MCF 10A (cell line): ENCODE measurements at regions of chr11 and their contacts with region 1.

Region 1: DNA sequence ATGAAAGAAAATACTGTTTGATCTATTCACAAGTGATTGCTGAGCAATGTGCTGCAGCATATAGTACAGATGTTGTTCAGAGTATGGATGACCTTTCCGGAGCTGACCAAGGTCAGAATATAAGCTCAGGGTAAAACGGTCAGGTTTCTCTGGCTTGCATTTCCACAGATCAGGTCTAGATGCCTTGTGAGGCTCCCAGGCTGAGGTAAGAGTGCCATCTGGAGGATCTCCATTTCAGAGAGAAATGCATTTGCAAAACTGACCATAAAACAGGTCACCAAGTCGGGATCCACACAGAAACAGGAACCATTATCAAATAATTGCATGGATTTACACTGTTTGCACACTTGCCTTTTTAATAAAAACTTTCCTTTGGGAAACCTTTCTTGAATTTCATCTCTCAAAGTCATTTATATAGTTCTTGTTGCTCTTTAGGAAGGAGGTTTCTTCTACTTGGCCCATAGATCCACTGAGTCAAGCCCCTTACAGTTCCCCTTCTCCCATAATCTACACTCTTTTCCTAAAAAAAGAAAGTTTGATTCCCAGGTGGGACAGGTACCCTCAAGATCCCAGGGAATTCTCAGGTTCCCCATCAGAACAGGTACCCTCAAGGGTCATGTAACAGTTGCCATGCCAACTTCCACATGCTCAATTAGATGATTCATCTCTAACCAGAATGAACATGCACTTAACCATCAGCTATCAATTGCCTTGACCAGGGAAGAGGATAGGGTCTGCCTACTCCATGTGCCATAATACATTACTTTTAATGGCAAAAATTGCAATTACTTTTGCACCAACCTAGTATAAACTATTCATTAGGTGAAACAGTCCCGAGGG is 25.0 kb upstream of the TMPRSS5 start:
- DNase-seq: peak; percentile 53
- H3K4me3 Mint-ChIP-seq: no peak overlapping the region
- H3K27ac Mint-ChIP-seq: no peak overlapping the region
- H3K4me1 Mint-ChIP-seq: peaks cover 12% of the 10 kb centered on the region
- H3K27me3 Mint-ChIP-seq: no peaks in the 10 kb centered on the region
- CTCF ChIP-seq: peak; percentile 67

Region 2: DNA sequence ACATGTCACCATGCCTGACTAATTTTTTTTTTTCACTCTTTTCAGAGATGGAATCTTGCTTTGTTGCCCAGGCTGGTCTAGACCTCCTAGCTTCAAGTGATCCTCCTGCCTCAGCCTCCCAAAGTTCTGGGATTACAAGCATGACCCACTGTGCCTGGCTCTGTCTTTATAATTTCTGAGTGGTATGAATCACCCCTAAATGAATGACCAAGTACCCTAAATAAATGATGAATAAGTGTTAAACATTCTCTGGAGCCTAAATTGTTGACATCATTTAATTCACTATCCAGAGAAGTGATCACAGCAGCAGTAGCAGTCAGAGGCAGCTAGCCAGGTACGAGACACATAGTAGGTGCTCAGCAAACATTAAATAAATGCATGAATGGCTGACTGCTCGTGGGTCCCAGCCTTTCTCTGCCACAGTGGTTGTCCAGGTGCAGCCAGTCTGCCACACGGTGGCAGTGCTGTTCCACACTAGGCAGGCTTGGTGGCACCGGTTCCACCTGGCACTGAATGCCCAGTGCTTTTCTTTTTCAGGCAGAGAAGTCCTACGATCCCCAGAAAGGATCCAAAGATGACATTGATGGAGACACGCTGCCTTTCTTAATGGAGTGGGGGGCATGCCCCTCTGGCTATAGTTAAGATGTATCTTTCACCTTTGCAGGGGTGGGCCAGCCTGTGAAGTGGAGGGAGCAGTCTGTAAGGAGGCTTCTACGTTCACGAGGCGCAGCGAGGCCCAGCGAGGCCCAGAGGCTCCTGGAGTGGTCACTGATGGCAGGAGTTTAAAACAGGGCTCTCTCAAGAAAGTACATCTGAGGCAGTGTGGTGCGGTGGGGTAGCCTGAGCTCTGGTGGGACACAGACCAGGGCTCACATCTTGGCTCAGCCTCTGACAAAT is 425.4 kb before region 1 on chr11:
- CTCF ChIA-PET with region 1: interaction called, 105 read pairs
- POLR2A ChIA-PET with region 1: no interaction called
- intact Hi-C with region 1: loop called (anchors 1 kb)
- DNase-seq: peak; percentile 79
- H3K4me3 Mint-ChIP-seq: no peak overlapping the region
- H3K27ac Mint-ChIP-seq: no peak overlapping the region
- H3K4me1 Mint-ChIP-seq: peaks cover 5% of the 10 kb centered on the region
- H3K27me3 Mint-ChIP-seq: peaks cover 13% of the 10 kb centered on the region
- CTCF ChIP-seq: peak; percentile 98

Region 3: DNA sequence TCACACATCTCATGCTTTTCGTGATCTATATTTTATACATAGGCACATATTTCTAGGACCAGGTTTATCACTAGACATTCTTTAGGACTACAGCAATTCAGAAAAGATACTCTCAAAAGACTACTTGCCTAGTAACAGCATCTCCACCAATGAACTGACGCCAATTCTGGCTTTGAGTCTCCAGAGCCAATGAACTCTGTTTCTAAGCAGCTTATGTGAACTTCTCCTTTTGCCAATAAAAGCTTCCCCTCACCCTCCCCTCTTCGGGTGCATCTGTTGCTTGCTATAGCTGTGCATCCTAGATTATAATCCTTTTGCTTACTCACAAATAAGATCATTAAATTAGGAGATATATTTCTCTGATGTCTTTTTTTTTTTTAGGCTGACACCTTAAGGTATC is 355.0 kb before region 1 on chr11:
- CTCF ChIA-PET with region 1: no interaction called
- POLR2A ChIA-PET with region 1: no interaction called
- intact Hi-C with region 1: loop called (anchors 10 kb)
- DNase-seq: no peak
- H3K4me3 Mint-ChIP-seq: no peak overlapping the region
- H3K27ac Mint-ChIP-seq: no peak overlapping the region
- H3K4me1 Mint-ChIP-seq: peaks cover 46% of the 10 kb centered on the region
- H3K27me3 Mint-ChIP-seq: no peaks in the 10 kb centered on the region
- CTCF ChIP-seq: no peak

Region 4: GRCh38 chr11:113532697-113533424 is 198.2 kb before region 1 on chr11:
- CTCF ChIA-PET with region 1: interaction called, 82 read pairs
- POLR2A ChIA-PET with region 1: interaction called, 3 read pairs
- intact Hi-C with region 1: loop called (anchors 2 kb)
- DNase-seq: peak; percentile 77
- H3K4me3 Mint-ChIP-seq: no peak overlapping the region
- H3K27ac Mint-ChIP-seq: no peak overlapping the region
- H3K4me1 Mint-ChIP-seq: peaks cover 20% of the 10 kb centered on the region
- H3K27me3 Mint-ChIP-seq: no peaks in the 10 kb centered on the region
- CTCF ChIP-seq: peak; percentile 89

Region 5: GRCh38 chr11:113796663-113797259 is 65.7 kb after region 1 on chr11:
- CTCF ChIA-PET with region 1: interaction called, 14 read pairs
- POLR2A ChIA-PET with region 1: no interaction called
- intact Hi-C with region 1: no loop called
- DNase-seq: peak; percentile 66
- H3K4me3 Mint-ChIP-seq: no peak overlapping the region
- H3K27ac Mint-ChIP-seq: no peak overlapping the region
- H3K4me1 Mint-ChIP-seq: no peaks in the 10 kb centered on the region
- H3K27me3 Mint-ChIP-seq: no peaks in the 10 kb centered on the region
- CTCF ChIP-seq: peak; percentile 55